Activated naive CD4-positive, alpha-beta T cell treated with anti-CD3 and anti-CD28 coated beads for 36 hours (primary cell): ENCODE measurements at regions of chr19 and their contacts with region 1.

Region 1: GRCh38 chr19:48321622-48322591 is 3.4 kb upstream of the EMP3 start:
- DNase-seq: peak; percentile 99
- H3K4me3 Mint-ChIP-seq: peak overlapping the region; percentile 92
- H3K27ac Mint-ChIP-seq: peak overlapping the region; percentile 99
- H3K4me1 Mint-ChIP-seq: peaks cover 57% of the 10 kb centered on the region
- H3K27me3 Mint-ChIP-seq: no peaks in the 10 kb centered on the region

Region 2: DNA sequence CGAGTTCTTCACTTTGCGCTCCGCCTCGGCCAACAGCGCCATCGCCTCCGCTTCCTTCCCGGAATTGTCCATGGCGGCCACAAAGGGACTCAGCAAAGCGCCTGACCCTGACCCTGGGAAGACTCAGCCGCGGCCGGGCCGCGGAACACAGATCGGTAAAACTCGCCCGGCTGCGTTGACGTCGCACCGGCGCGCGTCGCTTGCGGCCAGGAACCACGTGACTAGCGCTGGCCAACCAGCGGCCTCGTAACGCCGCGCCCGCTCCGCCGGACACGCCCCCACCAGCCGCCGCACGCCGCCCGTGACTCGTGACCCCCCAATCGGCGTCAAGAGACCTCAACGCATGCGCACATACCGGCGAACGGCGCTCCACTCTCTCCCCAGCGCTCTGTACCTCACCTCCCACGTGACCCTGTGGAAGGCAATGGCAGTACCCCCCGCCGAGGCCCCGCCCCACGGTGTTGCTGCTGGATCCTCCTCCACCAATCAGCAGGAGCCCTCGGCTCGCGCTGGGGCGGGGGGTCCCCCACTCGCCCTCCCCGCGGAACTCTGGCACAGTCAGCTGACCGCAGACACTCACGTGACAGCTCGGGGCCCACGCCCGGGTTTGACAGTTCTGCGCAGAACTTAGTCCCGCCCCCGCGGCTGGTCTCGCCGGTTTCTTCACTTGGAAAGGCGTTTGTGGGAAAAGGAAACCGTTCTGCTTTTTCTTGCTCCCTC is 806.9 kb before region 1 on chr19 and contains the start of gene NAPA:
- CTCF ChIA-PET with region 1: no interaction called
- intact Hi-C with region 1: loop called (anchors 5 kb)
- DNase-seq: peak; percentile 100
- H3K4me3 Mint-ChIP-seq: peak within 1 kb of the TSS; percentile 98
- H3K27ac Mint-ChIP-seq: peak within 1 kb of the TSS; percentile 97
- H3K4me1 Mint-ChIP-seq: peaks cover 81% of the 10 kb centered on the region
- H3K27me3 Mint-ChIP-seq: no peaks in the 10 kb centered on the region
- total RNA-seq, gene NAPA: 72.5 to 75.1 TPM

Region 3: GRCh38 chr19:48333467-48334384 is 11.8 kb after region 1 on chr19:
- CTCF ChIA-PET with region 1: interaction called, 131 read pairs
- intact Hi-C with region 1: loop called (anchors 1 kb)
- DNase-seq: peak; percentile 95
- H3K4me3 Mint-ChIP-seq: peak overlapping the region; percentile 87
- H3K27ac Mint-ChIP-seq: peak overlapping the region; percentile 92
- H3K4me1 Mint-ChIP-seq: peaks cover 47% of the 10 kb centered on the region
- H3K27me3 Mint-ChIP-seq: no peaks in the 10 kb centered on the region

Region 4: DNA sequence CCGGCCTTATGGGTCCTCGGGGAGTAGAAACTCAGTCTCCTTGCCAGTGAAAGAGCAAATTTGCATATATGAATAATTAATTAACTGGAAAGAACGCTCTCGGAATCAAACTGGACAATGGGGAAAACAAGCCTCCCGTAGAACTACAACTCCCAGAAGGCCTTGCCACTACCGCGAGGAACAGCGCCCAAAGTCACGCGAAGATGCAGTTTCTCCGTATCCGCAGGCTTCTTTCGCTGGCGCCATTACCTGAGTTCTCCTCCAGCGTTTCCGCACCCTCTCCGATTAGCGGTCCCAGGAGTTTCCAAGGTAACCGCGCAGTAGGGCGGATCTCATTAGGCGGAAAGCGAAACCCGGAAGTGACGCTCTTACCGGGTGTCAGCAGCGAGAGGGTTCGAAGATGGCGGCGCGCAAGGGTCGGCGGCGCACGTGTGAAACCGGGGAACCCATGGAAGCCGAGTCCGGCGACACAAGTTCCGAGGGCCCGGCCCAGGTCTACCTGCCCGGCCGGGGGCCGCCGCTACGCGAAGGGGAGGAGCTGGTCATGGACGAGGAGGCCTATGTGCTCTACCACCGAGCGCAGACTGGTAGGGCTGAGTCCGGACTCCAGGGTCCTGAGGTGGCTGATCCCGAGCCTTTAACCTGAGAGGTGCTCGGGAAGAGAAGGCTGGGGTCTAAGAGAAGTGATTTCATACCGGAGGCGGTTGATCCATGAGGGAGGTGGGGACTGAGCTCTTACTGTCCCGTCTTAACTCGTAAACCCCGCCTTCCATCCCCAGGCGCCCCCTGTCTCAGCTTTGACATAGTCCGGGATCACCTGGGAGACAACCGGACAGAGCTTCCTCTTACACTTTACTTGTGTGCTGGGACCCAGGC is 123.9 kb after region 1 on chr19 and contains the start of gene GRWD1:
- CTCF ChIA-PET with region 1: no interaction called
- intact Hi-C with region 1: loop called (anchors 1 kb)
- DNase-seq: peak; percentile 97
- H3K4me3 Mint-ChIP-seq: peak within 1 kb of the TSS; percentile 90
- H3K27ac Mint-ChIP-seq: peak within 1 kb of the TSS; percentile 84
- H3K4me1 Mint-ChIP-seq: peaks cover 35% of the 10 kb centered on the region
- H3K27me3 Mint-ChIP-seq: peaks cover 18% of the 10 kb centered on the region
- total RNA-seq, gene GRWD1: 32.4 to 36.0 TPM

Region 5: GRCh38 chr19:48588670-48589399 is 266.9 kb after region 1 on chr19:
- CTCF ChIA-PET with region 1: interaction called, 8 read pairs
- intact Hi-C with region 1: loop called (anchors 1 kb)
- DNase-seq: peak; percentile 91
- H3K4me3 Mint-ChIP-seq: peak overlapping the region; percentile 66
- H3K27ac Mint-ChIP-seq: peak overlapping the region; percentile 16
- H3K4me1 Mint-ChIP-seq: peaks cover 11% of the 10 kb centered on the region
- H3K27me3 Mint-ChIP-seq: peaks cover 4% of the 10 kb centered on the region

Region 6: DNA sequence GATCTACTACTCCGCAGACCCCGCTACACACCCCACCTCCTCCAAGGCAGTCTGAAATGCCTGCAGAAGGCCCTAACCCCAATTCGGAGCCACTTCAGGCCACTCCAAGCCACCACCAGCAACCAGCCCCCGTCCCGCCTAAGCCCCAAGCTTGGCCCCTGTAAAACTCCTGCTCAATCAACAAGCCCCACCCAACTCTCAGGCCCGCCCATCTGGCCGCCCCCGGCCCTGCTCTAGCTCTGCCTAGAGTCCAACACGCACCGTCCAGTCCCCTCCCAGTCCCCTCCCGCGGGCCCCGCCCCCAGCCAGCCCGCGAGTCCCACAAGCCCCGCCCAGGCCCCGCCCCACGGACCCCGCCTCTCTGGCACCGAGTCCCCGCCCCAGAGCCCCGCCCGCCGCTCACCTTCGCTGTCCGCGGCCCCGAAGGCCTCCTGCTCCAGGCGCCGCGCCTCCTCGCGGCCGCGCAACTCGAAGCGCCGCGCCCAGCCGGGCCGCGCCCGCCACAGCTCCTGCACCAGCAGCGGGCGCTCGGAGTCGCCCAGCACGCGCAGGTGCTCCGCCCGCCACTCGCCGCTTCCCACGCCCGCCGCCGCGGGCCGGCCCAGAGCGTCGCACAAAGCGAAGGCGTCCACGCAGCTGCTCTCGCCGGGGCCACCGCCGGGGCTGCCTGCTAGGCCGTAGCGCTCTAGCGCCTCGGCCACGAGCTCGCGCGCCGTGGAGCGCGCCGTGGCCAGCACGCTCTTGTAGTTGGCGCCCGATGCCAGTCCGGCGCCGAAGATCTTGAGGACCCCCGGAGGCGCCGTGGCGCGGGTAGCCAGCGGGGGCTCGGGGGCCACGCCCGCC is 416.9 kb after region 1 on chr19:
- CTCF ChIA-PET with region 1: no interaction called
- intact Hi-C with region 1: loop called (anchors 2 kb)
- DNase-seq: peak; percentile 96
- H3K4me3 Mint-ChIP-seq: peak overlapping the region; percentile 56
- H3K27ac Mint-ChIP-seq: no peak overlapping the region
- H3K4me1 Mint-ChIP-seq: peaks cover 17% of the 10 kb centered on the region
- H3K27me3 Mint-ChIP-seq: peaks cover 10% of the 10 kb centered on the region